ENCODE measurements at regions of chr17 and their contacts with region 1.

Region 1: DNA sequence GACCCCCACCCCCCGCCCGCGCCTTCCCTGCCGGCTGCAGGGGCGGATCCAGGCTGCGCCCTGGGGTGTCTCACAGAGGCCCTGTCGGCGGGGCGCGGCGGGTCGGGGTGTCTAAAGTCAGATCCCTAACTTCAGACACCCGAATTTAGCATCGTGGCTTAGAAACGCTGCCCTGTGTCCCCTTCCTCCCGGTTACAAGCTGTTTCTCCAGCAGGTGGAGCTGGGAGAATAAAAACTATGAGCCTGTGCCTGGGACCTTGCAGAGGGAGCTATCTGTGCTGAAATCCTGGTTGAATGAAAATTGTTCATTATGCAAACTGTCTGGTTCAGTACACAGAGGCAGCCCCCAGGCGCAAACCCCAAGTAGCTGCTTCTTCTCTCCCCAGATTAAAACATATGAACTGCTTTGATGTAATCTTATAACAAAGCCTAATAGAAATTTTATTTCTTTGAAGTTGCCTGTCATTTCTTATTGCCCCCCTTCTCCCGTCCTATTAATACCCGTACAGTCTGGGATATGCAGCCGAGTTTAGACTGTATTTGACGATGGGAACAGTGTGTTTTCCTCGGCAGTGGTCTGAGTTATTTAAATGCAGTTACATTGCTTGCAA is 79.0 kb downstream of the RPA1 start:
- DNase-seq: no peak
- ATAC-seq: peak; percentile 90
- H3K4me3 ChIP-seq: peak overlapping the region; percentile 19
- H3K27ac ChIP-seq: no peak overlapping the region
- H3K4me1 ChIP-seq: peaks cover 4% of the 10 kb centered on the region
- H3K27me3 ChIP-seq: peaks cover 63% of the 10 kb centered on the region
- CTCF ChIP-seq: peak; percentile 71

Region 2: GRCh38 chr17:2029911-2030778 is 121.3 kb after region 1 on chr17 and contains the start of gene DPH1:
- intact Hi-C with region 1: loop called (anchors 5 kb)
- DNase-seq: peak; percentile 94
- ATAC-seq: peak; percentile 93
- H3K4me3 ChIP-seq: peak within 1 kb of the TSS; percentile 93
- H3K27ac ChIP-seq: peak within 1 kb of the TSS; percentile 69
- H3K4me1 ChIP-seq: peaks cover 18% of the 10 kb centered on the region
- H3K27me3 ChIP-seq: peaks cover 31% of the 10 kb centered on the region
- CTCF ChIP-seq: no peak
- total RNA-seq, gene DPH1: 47.8 TPM

Measured in upper lobe of right lung (tissue), 1 donor.